ENCODE measurements at regions of chr19 and their contacts with region 1.

Region 1: DNA sequence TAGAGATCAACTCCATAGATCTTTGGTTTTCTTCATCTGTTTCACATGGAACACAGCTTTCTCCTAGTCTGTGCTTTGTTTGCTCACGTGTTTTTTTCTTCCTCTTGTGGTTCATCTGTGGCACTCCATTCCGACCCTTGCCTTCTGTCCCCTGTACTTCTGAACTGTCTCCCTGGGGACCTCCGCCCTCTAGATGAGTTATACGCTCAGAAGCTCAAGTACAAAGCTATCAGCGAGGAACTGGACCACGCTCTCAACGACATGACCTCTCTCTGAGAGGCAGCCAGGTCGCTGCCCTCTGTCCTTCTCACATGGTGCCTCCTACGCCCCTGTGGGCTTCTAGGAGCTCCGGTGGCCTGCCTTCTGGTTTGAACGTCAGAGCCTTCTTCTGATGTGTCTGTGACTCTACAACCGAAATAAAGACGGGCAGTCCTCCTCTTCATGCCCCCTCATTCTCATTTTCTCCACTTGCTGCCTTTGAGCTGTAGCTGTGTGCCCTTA is 16.6 kb upstream of the RAB8A start:
- DNase-seq: no peak
- H3K4me3 ChIP-seq: no peak overlapping the region
- H3K27ac ChIP-seq: no peak overlapping the region
- H3K4me1 ChIP-seq: no peaks in the 10 kb centered on the region
- H3K27me3 ChIP-seq: no peaks in the 10 kb centered on the region
- CTCF ChIP-seq: no peak
- EP300 ChIP-seq: no peak
- POLR2A ChIP-seq: no peak
- RAD21 ChIP-seq: no peak

Region 2: GRCh38 chr19:16106121-16106520 is 11.0 kb after region 1 on chr19:
- CTCF ChIA-PET with region 1: interaction called, 6 read pairs
- POLR2A ChIA-PET with region 1: interaction called, 582 read pairs
- DNase-seq: no peak
- H3K4me3 ChIP-seq: no peak overlapping the region
- H3K27ac ChIP-seq: no peak overlapping the region
- H3K4me1 ChIP-seq: peaks cover 0 to 7% (median 0%) of the 10 kb centered on the region in 4 experiments; a peak in 4 of 7 replicates
- H3K27me3 ChIP-seq: no peaks in the 10 kb centered on the region
- CTCF ChIP-seq: no peak
- EP300 ChIP-seq: no peak
- POLR2A ChIP-seq: no peak
- RAD21 ChIP-seq: no peak